ENCODE measurements at regions of chr6 and their contacts with region 1.

Region 1: GRCh38 chr6:88982720-88983119 is 19.3 kb upstream of the RNGTT start:
- DNase-seq: peak; percentile 69 to 83
- ATAC-seq: peak; percentile 100
- H3K4me3 ChIP-seq: no peak overlapping the region
- H3K27ac ChIP-seq: peak overlapping the region; percentile 49 to 63 (median 53)
- H3K4me1 ChIP-seq: peaks cover 7 to 10% of the 10 kb centered on the region in 2 donors
- H3K27me3 ChIP-seq: no peaks in the 10 kb centered on the region
- CTCF ChIP-seq: peak; percentile 68 to 84 (median 72)
- POLR2A ChIP-seq: no peak

Region 2: DNA sequence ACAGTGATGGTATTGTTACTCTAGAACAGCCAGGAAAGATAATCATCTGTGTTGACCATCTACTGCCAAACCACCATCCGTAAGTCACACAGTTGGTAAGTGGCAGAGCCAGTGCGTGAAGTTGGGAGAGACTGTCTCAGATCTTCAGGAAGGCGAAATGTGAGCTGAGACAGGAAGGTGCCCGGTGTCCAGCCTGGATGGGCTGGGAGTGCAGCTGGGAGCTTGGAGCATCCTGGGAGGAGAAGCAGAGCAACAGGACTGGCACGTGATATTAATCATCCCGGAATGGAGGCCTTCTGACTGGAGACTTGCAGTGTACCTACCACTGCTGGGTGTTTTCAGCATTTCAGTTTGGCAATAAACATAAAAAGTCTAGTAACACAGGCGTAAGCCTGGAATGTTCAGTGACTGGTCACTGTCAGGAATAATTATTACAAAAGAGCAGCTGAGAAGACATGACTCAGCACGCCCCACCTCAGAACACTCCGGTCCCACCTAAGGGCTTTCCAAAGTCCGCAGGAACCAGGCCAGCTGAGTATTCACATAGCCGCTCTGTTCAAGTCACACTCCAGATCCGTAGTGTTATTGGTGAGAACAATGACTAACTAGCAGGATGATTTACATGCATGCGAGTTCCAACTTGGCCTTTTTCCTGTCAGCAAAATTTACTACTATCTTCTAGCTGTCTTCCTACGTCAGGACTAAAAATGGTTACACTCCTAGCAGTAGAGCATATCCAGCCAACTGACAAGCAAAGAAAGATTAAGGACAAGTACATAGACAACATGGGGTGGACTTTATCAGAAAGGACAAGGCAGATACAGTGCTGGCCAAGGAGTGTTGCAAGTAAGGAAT is 52.8 kb after region 1 on chr6:
- in situ Hi-C with region 1: no loop called
- intact Hi-C with region 1: loop called (anchors 1 kb)
- DNase-seq: peak; percentile 97 to 98
- ATAC-seq: peak; percentile 81 to 87
- H3K4me3 ChIP-seq: peak overlapping the region in 3 of 4 donors; percentile 14 to 43 (median 24)
- H3K27ac ChIP-seq: peak overlapping the region; percentile 90 to 94 (median 92)
- H3K4me1 ChIP-seq: peaks cover 38 to 46% of the 10 kb centered on the region in 2 donors
- H3K27me3 ChIP-seq: no peaks in the 10 kb centered on the region
- CTCF ChIP-seq: no peak
- POLR2A ChIP-seq: peak; percentile 75 to 82

Region 3: GRCh38 chr6:89098461-89098860 is 115.7 kb after region 1 on chr6:
- in situ Hi-C with region 1: loop called in 1 of 4 experiments (anchors 10 kb)
- intact Hi-C with region 1: no loop called
- DNase-seq: no peak
- ATAC-seq: no peak
- H3K4me3 ChIP-seq: no peak overlapping the region
- H3K27ac ChIP-seq: no peak overlapping the region
- H3K4me1 ChIP-seq: no peaks in the 10 kb centered on the region
- H3K27me3 ChIP-seq: no peaks in the 10 kb centered on the region
- CTCF ChIP-seq: no peak
- POLR2A ChIP-seq: no peak

Region 4: GRCh38 chr6:89122625-89123024 is 139.9 kb after region 1 on chr6:
- in situ Hi-C with region 1: loop called in 1 of 4 experiments (anchors 10 kb)
- intact Hi-C with region 1: loop called (anchors 1 kb)
- DNase-seq: no peak
- ATAC-seq: peak; percentile 61 to 64
- H3K4me3 ChIP-seq: no peak overlapping the region
- H3K27ac ChIP-seq: no peak overlapping the region
- H3K4me1 ChIP-seq: peaks cover 0 to 5% of the 10 kb centered on the region in 2 donors
- H3K27me3 ChIP-seq: no peaks in the 10 kb centered on the region
- CTCF ChIP-seq: peak; percentile 16 to 54 (median 50)
- POLR2A ChIP-seq: no peak

Region 5: GRCh38 chr6:89145787-89146646 is 163.3 kb after region 1 on chr6 and contains the start of gene PM20D2:
- in situ Hi-C with region 1: no loop called
- intact Hi-C with region 1: no loop called
- DNase-seq: peak; percentile 54 to 75
- ATAC-seq: peak; percentile 67 to 71
- H3K4me3 ChIP-seq: peak within 1 kb of the TSS; percentile 74 to 90 (median 82)
- H3K27ac ChIP-seq: peak within 1 kb of the TSS; percentile 94 to 99 (median 98)
- H3K4me1 ChIP-seq: peaks cover 23 to 25% of the 10 kb centered on the region in 2 donors
- H3K27me3 ChIP-seq: no peaks in the 10 kb centered on the region
- CTCF ChIP-seq: no peak
- POLR2A ChIP-seq: peak; percentile 85 to 88
- total RNA-seq, gene PM20D2: 18.1 to 54.6 (median 26.3) TPM

Region 6: GRCh38 chr6:89371849-89372505 is 389.3 kb after region 1 on chr6:
- in situ Hi-C with region 1: loop called in 3 of 4 experiments (anchors 5 to 25 kb)
- intact Hi-C with region 1: loop called (anchors 2 kb)
- DNase-seq: peak; percentile 46 to 78
- ATAC-seq: peak; percentile 67 to 75
- H3K4me3 ChIP-seq: no peak overlapping the region
- H3K27ac ChIP-seq: peak overlapping the region; percentile 60 to 79 (median 72)
- H3K4me1 ChIP-seq: peaks cover 30 to 37% of the 10 kb centered on the region in 2 donors
- H3K27me3 ChIP-seq: no peaks in the 10 kb centered on the region
- CTCF ChIP-seq: peak; percentile 77 to 98 (median 92)
- POLR2A ChIP-seq: no peak

Region 7: DNA sequence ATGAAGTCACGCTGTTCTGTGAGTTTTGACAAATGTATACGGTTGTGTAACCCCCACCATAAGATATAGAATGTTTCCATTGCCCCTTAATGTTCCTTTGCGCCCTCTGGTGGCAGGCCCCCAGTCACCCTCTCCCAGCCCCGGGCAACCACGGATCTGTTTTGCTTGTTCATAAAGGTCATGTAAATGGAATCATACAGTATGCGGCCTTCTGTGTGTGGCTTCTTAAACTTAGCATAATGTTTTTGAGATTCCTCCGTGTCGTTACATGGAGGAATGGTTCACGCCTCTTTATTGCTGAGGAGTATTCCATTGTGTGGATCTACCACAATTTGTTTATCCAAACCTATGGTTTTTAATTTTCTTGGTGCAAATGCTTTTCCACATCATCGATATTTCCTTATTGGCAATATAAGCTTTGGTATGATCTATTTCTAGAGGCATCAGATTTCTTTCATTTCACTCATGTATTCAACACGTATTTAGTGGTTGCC is 627.5 kb after region 1 on chr6:
- in situ Hi-C with region 1: loop called in 1 of 4 experiments (anchors 25 kb)
- intact Hi-C with region 1: no loop called
- DNase-seq: peak; percentile 23 to 45
- ATAC-seq: peak; percentile 65 to 70
- H3K4me3 ChIP-seq: no peak overlapping the region
- H3K27ac ChIP-seq: no peak overlapping the region
- H3K4me1 ChIP-seq: no peaks in the 10 kb centered on the region
- H3K27me3 ChIP-seq: no peaks in the 10 kb centered on the region
- CTCF ChIP-seq: peak; percentile 67 to 89 (median 81)
- POLR2A ChIP-seq: no peak

Measured in gastrocnemius medialis (tissue), 4 donors.